ENCODE measurements at regions of chr9 and their contacts with region 1.

Region 1: GRCh38 chr9:120936011-120936763 is 9.6 kb upstream of the TRAF1 start:
- DNase-seq: peak; percentile 83
- H3K4me3 ChIP-seq: peak overlapping the region; percentile 31 to 53; a peak in 3 of 4 replicates
- H3K27ac ChIP-seq: peak overlapping the region; percentile 87 to 98
- H3K4me1 ChIP-seq: peaks cover 38 to 56% of the 10 kb centered on the region in 2 experiments
- H3K27me3 ChIP-seq: no peaks in the 10 kb centered on the region
- CTCF ChIP-seq: peak; percentile 98
- EP300 ChIP-seq: peak in 1 of 2 experiments; percentile 66; a peak in 3 of 4 replicates
- RAD21 ChIP-seq: peak; percentile 93

Region 2: DNA sequence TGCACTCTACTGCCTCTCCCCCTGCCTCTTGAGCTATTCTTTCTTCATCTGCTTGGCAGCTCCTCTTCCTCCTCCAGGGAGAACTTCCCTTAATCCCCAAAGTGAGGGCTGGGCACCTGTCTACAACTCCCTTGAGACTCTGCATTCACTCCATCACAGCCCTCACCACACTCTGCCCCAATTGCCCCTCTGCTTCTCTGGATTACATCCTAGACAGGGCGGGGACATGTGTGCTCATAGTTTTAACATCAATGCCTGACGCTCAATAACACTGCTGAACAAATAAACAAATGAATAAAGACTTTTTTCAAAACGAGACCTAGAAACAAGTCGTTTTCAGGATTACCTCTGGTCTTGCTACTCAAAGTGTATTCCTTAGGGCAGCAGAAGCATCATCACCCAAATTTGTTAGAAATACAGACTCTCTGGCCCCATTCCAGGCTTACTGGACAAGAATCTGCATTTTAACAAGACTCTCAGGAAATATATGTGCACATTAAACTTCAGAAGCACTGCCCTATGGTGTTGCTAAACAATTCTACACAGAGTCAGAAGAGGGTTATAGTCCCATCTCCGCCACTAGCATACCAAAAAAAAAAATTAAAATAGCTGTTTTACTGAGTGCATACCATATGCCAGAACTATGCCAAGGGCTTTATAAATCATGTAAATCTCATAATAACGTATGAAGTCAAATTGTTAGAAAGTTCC is 471.9 kb before region 1 on chr9:
- CTCF ChIA-PET with region 1: no interaction called
- POLR2A ChIA-PET with region 1: no interaction called
- DNase-seq: no peak
- H3K4me3 ChIP-seq: no peak overlapping the region
- H3K27ac ChIP-seq: no peak overlapping the region
- H3K4me1 ChIP-seq: no peaks in the 10 kb centered on the region; a peak in 1 of 4 replicates
- H3K27me3 ChIP-seq: no peaks in the 10 kb centered on the region
- CTCF ChIP-seq: no peak
- EP300 ChIP-seq: no peak
- RAD21 ChIP-seq: no peak

Region 3: DNA sequence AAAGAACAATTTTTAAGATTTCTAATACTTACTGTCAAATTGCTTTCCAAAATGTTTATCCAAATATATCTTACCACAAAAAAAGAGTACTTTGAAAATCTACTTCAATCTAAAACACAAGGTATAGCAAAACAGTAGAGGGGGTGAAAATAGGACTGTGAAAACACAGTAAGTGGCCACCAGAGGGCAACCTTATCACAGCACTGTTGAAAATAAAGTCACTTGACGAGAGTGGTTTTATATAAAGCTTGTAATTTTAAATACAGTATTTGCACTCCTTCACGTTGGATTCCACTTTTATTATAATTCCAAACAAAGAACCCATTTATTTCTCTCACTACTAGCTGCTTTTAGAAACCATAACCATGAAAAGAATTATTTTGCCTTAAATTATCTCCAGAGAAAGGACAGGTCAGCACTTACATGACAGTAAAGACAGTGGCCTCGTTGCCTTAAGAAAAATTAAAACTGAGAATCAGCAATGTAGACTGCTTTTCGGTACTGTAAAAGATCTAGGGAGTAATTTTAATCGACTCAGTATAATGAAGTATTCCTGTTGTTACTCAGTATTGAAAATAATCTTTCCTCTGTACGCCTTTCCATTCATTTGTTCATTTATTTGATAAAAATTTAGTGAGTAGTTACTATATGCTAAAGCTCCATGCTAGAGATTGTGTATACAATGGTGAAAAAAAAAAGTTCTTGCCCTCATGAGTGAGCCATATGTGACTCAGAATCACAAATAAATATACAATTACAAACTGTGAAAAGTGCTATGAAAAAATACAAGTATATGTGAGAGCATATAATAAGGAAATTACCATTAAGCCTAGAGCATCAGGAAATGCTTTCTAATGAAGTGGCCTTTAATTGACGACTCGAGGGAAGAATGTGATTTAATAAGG is 316.2 kb before region 1 on chr9:
- CTCF ChIA-PET with region 1: interaction called, 10 read pairs
- POLR2A ChIA-PET with region 1: no interaction called
- DNase-seq: peak; percentile 67
- H3K4me3 ChIP-seq: peak overlapping the region in 1 of 2 experiments; percentile 36; a peak in 1 of 4 replicates
- H3K27ac ChIP-seq: no peak overlapping the region
- H3K4me1 ChIP-seq: peaks cover 0 to 17% of the 10 kb centered on the region in 2 experiments; a peak in 2 of 4 replicates
- H3K27me3 ChIP-seq: no peaks in the 10 kb centered on the region
- CTCF ChIP-seq: peak; percentile 95
- EP300 ChIP-seq: no peak
- RAD21 ChIP-seq: peak; percentile 92

Region 4: DNA sequence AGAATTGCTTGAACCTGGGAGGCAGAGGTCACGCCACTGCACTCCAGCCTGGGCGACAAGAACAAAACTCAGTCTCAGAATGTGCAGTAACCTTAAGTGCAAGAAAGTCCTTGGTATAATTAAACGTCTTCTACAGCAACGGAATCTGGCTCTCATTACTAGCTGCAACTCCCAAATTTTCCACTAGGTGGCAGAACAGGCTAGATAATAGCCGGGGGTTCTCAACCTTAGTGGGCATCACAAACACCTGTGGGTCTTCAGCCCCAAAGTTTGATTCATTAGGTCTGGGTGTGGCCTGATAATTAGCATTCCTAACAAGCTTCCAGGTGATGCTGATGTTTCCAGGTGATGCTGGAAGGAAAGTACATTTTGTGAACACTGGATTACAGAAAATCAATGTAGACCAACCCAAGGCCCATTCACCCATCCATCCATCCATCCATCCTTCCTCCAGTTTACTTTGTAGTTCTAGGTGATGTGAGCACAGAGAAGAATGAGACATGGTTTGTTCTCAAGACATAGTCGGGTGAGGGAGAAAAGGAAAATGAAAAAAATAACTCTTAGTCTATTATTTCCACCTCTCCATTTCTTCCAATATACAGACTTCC is 180.3 kb before region 1 on chr9:
- CTCF ChIA-PET with region 1: interaction called, 20 read pairs
- POLR2A ChIA-PET with region 1: no interaction called
- DNase-seq: peak; percentile 86
- H3K4me3 ChIP-seq: peak overlapping the region in 1 of 2 experiments; percentile 26; a peak in 1 of 4 replicates
- H3K27ac ChIP-seq: no peak overlapping the region; a peak in 1 of 4 replicates
- H3K4me1 ChIP-seq: peaks cover 0 to 8% of the 10 kb centered on the region in 2 experiments; a peak in 1 of 4 replicates
- H3K27me3 ChIP-seq: no peaks in the 10 kb centered on the region
- CTCF ChIP-seq: peak; percentile 90
- EP300 ChIP-seq: no peak
- RAD21 ChIP-seq: peak; percentile 94

Region 5: DNA sequence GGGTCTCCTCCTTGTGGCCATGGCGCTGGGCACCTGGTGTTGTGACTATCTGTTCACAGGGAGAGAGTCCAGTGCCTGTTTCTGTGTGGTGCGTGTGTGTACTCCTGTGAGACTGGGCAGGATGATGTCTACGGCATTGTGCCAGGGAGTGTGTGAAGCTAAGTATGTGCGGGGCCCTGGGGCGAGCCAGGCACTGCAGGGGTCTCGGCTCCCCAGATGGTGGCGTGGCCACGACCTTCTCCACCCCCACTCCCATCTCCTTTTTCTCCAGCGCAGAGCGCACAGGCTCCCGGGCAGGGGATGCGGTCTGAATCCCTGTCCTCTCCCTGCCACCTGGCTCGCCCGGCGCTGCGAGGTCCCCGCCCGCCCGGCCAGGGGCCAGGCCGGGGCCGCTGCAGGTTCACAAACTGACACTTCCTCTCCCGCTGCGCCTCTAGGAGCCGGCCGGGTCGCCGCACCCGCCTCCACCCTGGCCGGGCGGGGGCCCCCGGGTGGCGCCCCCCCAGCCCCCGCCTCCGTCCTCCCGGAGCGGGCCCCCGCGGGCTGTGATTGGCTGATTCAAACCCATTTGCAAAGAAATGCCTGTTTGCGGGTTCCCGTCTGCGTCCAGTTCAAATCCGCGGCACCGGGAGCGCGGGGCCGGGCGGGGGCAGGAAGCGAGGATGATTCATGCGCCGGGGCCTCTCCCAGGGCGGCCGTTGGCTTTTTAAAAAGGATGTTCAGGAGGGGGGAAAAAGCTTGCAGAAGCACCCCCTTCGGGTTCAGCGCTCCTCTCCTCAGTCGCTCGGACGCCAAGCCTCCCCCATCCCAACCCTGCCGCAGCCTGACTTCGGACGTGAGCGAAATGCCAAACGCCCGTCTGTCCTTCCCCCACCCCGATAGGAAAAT is 60.0 kb before region 1 on chr9:
- CTCF ChIA-PET with region 1: interaction called, 12 read pairs
- POLR2A ChIA-PET with region 1: interaction called, 8 read pairs
- DNase-seq: peak; percentile 94
- H3K4me3 ChIP-seq: peak overlapping the region; percentile 65 to 74
- H3K27ac ChIP-seq: peak overlapping the region; percentile 86 to 90
- H3K4me1 ChIP-seq: peaks cover 15 to 28% of the 10 kb centered on the region in 2 experiments; a peak in 3 of 4 replicates
- H3K27me3 ChIP-seq: no peaks in the 10 kb centered on the region
- CTCF ChIP-seq: peak; percentile 24
- EP300 ChIP-seq: peak in 1 of 2 experiments; percentile 85; a peak in 2 of 4 replicates
- RAD21 ChIP-seq: peak; percentile 24; the same call in 1 of the 2 replicates

Region 6: DNA sequence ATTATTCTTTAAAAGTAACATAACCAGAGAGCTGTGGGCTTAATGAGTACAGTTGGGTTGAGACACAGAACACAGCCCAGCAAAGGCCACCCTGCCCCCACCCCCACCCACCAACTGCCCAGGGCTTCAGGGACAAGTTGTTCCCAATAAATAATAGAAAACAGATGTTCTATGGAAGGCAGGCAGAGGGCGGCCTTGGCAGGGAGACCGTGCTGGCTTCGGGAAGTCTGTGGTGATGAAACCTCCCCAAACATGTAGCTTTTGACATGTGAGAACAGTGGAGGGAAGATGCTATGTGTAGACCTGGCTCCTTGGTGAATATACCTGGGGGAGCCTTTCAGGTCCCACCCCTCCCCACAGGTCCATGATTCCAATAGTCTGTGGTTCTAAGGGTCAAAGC is 19.6 kb before region 1 on chr9:
- CTCF ChIA-PET with region 1: interaction called, 42 read pairs
- POLR2A ChIA-PET with region 1: interaction called, 10 read pairs
- DNase-seq: peak; percentile 78
- H3K4me3 ChIP-seq: no peak overlapping the region
- H3K27ac ChIP-seq: peak overlapping the region in 1 of 2 experiments; percentile 95; a peak in 2 of 4 replicates
- H3K4me1 ChIP-seq: peaks cover 27 to 62% of the 10 kb centered on the region in 2 experiments
- H3K27me3 ChIP-seq: no peaks in the 10 kb centered on the region
- CTCF ChIP-seq: peak; percentile 17; the same call in 1 of the 2 replicates
- EP300 ChIP-seq: peak in 1 of 2 experiments; percentile 63; a peak in 1 of 4 replicates
- RAD21 ChIP-seq: peak; percentile 52

Region 7: GRCh38 chr9:120925535-120926396 is 10.4 kb before region 1 on chr9:
- CTCF ChIA-PET with region 1: interaction called, 42 read pairs
- POLR2A ChIA-PET with region 1: interaction called, 10 read pairs
- DNase-seq: no peak
- H3K4me3 ChIP-seq: no peak overlapping the region
- H3K27ac ChIP-seq: peak overlapping the region in 1 of 2 experiments; percentile 63; a peak in 2 of 4 replicates
- H3K4me1 ChIP-seq: peaks cover 17 to 37% of the 10 kb centered on the region in 2 experiments
- H3K27me3 ChIP-seq: no peaks in the 10 kb centered on the region
- CTCF ChIP-seq: no peak
- EP300 ChIP-seq: no peak
- RAD21 ChIP-seq: no peak

Region 8: DNA sequence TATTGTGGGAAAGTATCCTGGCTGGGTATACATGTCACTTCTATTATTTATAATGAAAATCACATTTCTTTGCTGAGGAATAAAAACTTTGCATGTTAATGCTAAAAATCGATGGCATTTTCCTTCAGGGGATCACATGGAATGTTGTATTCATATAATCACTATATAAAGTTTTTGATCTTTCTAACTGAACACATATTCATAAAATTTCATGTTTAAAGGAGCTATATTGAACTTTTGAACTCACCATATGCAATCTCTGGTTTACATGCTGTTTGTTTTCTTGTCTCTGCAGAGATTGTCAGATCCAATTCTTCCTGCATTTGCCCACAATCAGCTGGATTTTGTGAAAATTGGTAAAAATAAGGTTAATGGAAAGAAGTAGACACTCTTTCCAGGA is 23.8 kb after region 1 on chr9:
- CTCF ChIA-PET with region 1: interaction called, 10 read pairs
- POLR2A ChIA-PET with region 1: no interaction called
- DNase-seq: no peak
- H3K4me3 ChIP-seq: no peak overlapping the region
- H3K27ac ChIP-seq: no peak overlapping the region
- H3K4me1 ChIP-seq: no peaks in the 10 kb centered on the region
- H3K27me3 ChIP-seq: no peaks in the 10 kb centered on the region
- CTCF ChIP-seq: no peak
- EP300 ChIP-seq: no peak
- RAD21 ChIP-seq: no peak